ENCODE measurements at regions of chr3 and their contacts with region 1.

Region 1: DNA sequence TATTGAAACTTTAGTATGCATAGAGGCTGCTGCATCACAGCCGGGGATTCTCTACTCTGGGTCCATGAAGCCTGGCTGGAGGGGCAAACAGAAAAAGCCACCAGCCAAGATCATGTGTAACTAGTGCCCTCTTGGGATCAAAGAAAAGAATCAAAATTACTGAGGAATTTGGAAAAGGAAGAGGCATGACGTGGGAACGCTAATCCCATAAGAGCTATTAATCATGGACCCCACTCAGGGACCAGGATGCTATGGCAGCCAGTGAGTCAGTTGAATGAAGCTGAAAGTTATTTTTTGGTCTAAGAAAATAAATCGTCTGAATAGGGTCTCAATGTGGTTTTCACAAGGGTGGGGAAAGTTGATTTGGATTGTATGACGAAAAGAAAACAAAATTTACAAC is 1165.1 kb downstream of the ROBO2 start:
- DNase-seq: peak; percentile 65
- H3K4me3 ChIP-seq: no peak overlapping the region
- H3K27ac ChIP-seq: peak overlapping the region; percentile 10
- H3K4me1 ChIP-seq: peaks cover 4% of the 10 kb centered on the region
- H3K27me3 ChIP-seq: no peaks in the 10 kb centered on the region
- CTCF ChIP-seq: peak; percentile 9 to 37
- POLR2A ChIP-seq: no peak

Region 2: GRCh38 chr3:77038468-77038929 is 1166.5 kb before region 1 on chr3:
- CTCF ChIA-PET with region 1: interaction called, 23 read pairs
- POLR2A ChIA-PET with region 1: no interaction called
- dilution Hi-C with region 1: no loop called
- intact Hi-C with region 1: loop called (anchors 1 kb)
- DNase-seq: peak; percentile 67
- H3K4me3 ChIP-seq: peak overlapping the region in 1 of 3 experiments; percentile 21
- H3K27ac ChIP-seq: no peak overlapping the region
- H3K4me1 ChIP-seq: peaks cover 11% of the 10 kb centered on the region
- H3K27me3 ChIP-seq: peaks cover 17 to 26% of the 10 kb centered on the region in 2 experiments
- CTCF ChIP-seq: peak; percentile 32 to 51
- POLR2A ChIP-seq: no peak

Region 3: GRCh38 chr3:77320514-77320913 is 884.5 kb before region 1 on chr3:
- CTCF ChIA-PET with region 1: interaction called, 3 read pairs
- POLR2A ChIA-PET with region 1: no interaction called
- dilution Hi-C with region 1: no loop called
- intact Hi-C with region 1: loop called (anchors 1 kb)
- DNase-seq: peak; percentile 22
- H3K4me3 ChIP-seq: no peak overlapping the region
- H3K27ac ChIP-seq: no peak overlapping the region
- H3K4me1 ChIP-seq: no peaks in the 10 kb centered on the region
- H3K27me3 ChIP-seq: no peaks in the 10 kb centered on the region
- CTCF ChIP-seq: peak; percentile 38 to 39
- POLR2A ChIP-seq: no peak

Region 4: DNA sequence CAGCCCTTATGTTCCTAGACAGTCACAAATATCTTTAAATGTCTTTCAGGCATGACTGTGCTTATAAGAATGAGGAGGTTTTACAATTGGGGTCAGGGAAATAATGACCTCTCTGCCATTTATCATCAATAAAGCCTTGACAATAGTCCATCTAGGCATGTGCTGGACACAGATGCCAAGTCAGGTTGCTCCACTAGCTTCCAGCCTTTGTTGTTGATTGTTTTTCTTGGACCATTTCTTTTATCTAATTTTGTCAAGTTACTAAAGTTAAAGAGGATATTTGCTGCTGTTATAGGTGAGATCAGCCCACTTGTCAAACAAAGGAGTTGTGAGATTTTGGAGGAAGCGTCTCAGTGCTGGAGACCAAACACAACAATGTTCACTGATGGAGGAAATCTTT is 537.1 kb before region 1 on chr3:
- CTCF ChIA-PET with region 1: no interaction called
- POLR2A ChIA-PET with region 1: no interaction called
- dilution Hi-C with region 1: no loop called
- intact Hi-C with region 1: loop called (anchors 1 kb)
- DNase-seq: peak; percentile 35
- H3K4me3 ChIP-seq: no peak overlapping the region
- H3K27ac ChIP-seq: peak overlapping the region; percentile 39
- H3K4me1 ChIP-seq: peaks cover 14% of the 10 kb centered on the region
- H3K27me3 ChIP-seq: no peaks in the 10 kb centered on the region
- CTCF ChIP-seq: no peak
- POLR2A ChIP-seq: no peak

Region 5: GRCh38 chr3:77906102-77906709 is 298.8 kb before region 1 on chr3:
- CTCF ChIA-PET with region 1: interaction called, 4 read pairs
- POLR2A ChIA-PET with region 1: no interaction called
- dilution Hi-C with region 1: no loop called
- intact Hi-C with region 1: loop called (anchors 5 kb)
- DNase-seq: peak; percentile 49
- H3K4me3 ChIP-seq: no peak overlapping the region
- H3K27ac ChIP-seq: peak overlapping the region; percentile 50
- H3K4me1 ChIP-seq: peaks cover 4% of the 10 kb centered on the region
- H3K27me3 ChIP-seq: no peaks in the 10 kb centered on the region
- CTCF ChIP-seq: no peak
- POLR2A ChIP-seq: no peak

Region 6: GRCh38 chr3:78721771-78722543 is 517.0 kb after region 1 on chr3:
- CTCF ChIA-PET with region 1: no interaction called
- POLR2A ChIA-PET with region 1: no interaction called
- dilution Hi-C with region 1: no loop called
- intact Hi-C with region 1: no loop called
- DNase-seq: no peak
- H3K4me3 ChIP-seq: no peak overlapping the region
- H3K27ac ChIP-seq: no peak overlapping the region
- H3K4me1 ChIP-seq: no peaks in the 10 kb centered on the region
- H3K27me3 ChIP-seq: no peaks in the 10 kb centered on the region
- CTCF ChIP-seq: no peak
- POLR2A ChIP-seq: no peak